PC-9 (cell line): ENCODE measurements at regions of chr3 and their contacts with region 1.

Region 1: GRCh38 chr3:171480526-171480925 is 20.3 kb upstream of the TNIK start:
- DNase-seq: no peak
- H3K4me3 ChIP-seq: no peak overlapping the region
- H3K27ac ChIP-seq: no peak overlapping the region
- H3K4me1 ChIP-seq: no peaks in the 10 kb centered on the region; the same call in 1 of the 2 replicates
- H3K27me3 ChIP-seq: no peaks in the 10 kb centered on the region
- CTCF ChIP-seq: no peak

Region 2: DNA sequence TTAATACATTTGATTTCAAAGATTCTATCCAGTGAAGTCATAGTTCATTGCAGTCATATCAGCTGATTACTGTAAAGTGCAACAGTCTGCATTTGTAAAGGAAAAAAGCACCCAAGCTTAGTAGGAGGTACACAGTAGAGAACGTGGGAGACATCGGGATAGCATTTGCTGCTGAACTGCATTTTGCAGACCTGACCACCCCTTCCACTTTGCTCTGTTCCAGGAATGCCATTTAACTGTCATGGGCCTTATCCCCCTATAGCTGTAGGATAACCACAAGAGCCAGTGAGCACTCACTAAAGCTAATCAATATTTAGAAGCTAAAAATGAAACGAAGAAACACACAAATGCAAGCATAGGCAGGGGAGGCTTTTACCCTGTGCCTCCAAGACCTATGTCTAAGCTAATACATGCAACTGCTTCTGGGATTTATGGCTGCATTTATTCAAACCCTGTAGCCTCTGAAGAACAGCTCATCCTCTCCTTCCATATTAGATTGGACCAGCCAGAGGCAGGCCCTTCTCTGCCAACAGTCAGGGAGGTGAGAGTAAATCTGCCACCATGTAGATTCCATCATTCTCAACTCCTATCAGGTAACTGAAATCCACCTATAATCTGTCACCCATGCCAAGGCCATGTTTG is 43.3 kb before region 1 on chr3:
- CTCF ChIA-PET with region 1: no interaction called
- POLR2A ChIA-PET with region 1: interaction called, 11 read pairs
- intact Hi-C with region 1: no loop called
- DNase-seq: no peak
- H3K4me3 ChIP-seq: no peak overlapping the region
- H3K27ac ChIP-seq: no peak overlapping the region
- H3K4me1 ChIP-seq: no peaks in the 10 kb centered on the region
- H3K27me3 ChIP-seq: no peaks in the 10 kb centered on the region
- CTCF ChIP-seq: no peak

Region 3: GRCh38 chr3:172341482-172342059 is 861.0 kb after region 1 on chr3:
- CTCF ChIA-PET with region 1: no interaction called
- POLR2A ChIA-PET with region 1: no interaction called
- intact Hi-C with region 1: no loop called
- DNase-seq: peak; percentile 24 to 77
- H3K4me3 ChIP-seq: no peak overlapping the region
- H3K27ac ChIP-seq: no peak overlapping the region
- H3K4me1 ChIP-seq: peaks cover 6% of the 10 kb centered on the region; the same call in 1 of the 2 replicates
- H3K27me3 ChIP-seq: no peaks in the 10 kb centered on the region
- CTCF ChIP-seq: peak; percentile 89